HEK293T (cell line): ENCODE measurements at regions of chr5 and their contacts with region 1.

Region 1: DNA sequence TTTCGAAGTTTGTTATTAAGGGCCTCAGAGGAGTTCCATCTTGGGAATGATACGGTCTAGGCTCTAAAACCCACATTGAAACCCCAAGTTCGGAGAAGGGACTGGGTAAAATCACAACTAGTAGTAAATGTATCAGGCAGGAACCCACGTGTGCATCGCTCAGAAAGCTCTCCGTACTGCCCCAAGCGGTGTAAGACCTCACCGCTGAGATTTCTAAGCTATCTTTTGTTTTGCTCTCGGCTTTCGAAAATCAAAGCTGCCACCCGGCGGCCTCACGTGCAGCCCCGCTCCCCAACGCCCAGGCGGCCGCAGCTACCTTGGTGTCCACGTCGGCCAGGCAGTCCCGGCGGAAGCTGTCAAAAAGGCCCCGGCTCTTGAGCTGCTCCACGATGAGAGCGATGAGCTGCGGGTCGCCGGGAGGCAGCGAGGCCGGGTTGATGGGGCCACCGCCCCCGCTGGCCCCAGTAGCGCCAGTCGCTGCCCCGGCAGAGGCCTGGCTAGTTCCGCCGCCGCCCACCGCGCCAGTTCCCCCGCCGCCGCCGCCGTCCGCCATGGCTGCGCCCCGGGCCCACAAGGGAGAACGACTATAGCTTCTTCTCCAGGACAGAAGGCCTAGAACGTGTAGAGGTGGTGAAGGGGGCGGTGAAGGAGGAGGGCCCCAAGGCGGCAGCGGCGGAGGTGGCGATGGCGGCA is 420 bp downstream of the BOD1 start:
- DNase-seq: peak; percentile 78

Region 2: DNA sequence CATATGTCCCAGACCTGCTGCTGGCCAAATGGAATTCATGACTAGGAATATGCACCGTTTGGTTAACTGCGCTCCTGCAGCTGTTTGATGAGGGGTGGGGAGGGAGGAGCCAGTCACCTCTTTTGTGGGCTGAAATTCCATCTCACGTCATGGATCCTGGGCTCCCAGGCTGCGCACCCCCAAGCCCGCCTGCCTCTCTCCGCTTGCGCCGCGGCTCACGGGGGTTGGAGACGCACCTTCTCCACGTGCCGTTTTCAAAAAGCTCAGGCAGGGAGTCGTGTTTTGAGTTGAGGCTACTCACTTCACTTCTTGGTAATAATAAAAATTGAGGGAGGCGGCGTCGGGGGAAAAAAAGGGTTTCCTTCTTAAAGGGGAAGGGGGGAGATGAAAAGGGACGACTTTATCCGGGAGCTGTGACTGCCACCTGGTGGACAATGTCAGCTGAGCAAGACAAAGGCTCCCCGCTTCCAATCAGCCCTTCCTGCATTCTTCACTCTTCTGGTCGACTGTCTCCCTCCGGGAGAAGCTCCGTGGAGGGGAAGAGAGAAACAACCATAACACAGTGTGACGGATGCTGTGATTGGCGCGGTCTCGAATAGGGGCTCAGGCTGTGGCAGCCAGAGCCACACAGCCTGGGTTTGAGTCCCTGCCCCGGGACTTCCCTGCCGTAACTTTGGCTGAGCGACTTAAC is 357.0 kb after region 1 on chr5:
- CTCF ChIA-PET with region 1: interaction called, 16 read pairs
- POLR2A ChIA-PET with region 1: interaction called, 28 read pairs
- DNase-seq: peak; percentile 90